Activated T-helper 1 cell treated with anti-CD3 and anti-CD28 coated beads, Interleukin-12 subunit alpha, Interleukin-12 subunit beta, Interleukin-2, Interleukin-4 antibody, amounts not matched to agents 30 ng/mL and 10 ng/mL and 1 ng/mL, durations not matched to agents 14 hours and 24 hours and 36 hours (primary cell): ENCODE measurements at regions of chr10 and their contacts with region 1.

Region 1: DNA sequence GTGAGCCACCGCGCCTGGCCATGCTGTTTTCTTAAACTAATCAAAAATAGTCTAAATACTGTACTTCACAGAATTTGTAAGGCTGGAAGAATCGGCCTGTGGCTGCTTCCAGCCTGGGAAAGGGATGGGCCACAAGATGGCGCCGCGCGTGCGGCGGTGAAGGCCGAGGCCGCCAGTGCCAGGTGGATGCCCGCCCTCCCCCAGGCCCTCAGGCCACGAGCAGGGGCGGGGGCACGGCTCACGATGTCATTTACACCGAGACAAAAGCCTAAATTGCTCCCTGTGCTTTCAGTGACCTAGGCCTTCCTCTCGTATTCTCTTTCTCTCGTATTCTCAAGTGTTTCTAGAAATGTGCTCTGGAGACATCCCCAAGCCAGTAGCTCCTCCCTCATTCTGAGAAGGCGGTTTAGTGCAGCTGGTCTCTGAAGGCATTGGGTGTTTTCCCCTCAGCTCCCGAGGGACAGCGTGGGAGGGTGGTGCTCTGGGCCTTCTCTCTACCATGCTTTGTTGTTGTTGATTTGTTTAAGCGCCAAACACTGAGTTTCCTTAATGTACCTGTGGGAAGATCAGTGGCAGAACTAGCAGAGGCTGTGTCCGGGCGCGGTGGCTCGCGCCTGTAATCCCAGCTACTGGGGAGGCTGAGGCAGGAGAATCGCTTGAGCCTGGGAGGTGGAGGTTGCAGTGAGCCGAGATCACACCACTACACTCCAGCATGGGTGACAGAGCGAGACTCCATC is 68.4 kb downstream of the CDC123 start:
- DNase-seq: peak; percentile 63
- H3K4me3 Mint-ChIP-seq: peak overlapping the region; percentile 82
- H3K27ac Mint-ChIP-seq: peak overlapping the region; percentile 98
- H3K4me1 Mint-ChIP-seq: peaks cover 23% of the 10 kb centered on the region
- H3K27me3 Mint-ChIP-seq: peaks cover 1% of the 10 kb centered on the region

Region 2: GRCh38 chr10:12097791-12098190 is 166.6 kb before region 1 on chr10:
- intact Hi-C with region 1: no loop called
- DNase-seq: no peak
- H3K4me3 Mint-ChIP-seq: no peak overlapping the region
- H3K27ac Mint-ChIP-seq: no peak overlapping the region
- H3K4me1 Mint-ChIP-seq: no peaks in the 10 kb centered on the region
- H3K27me3 Mint-ChIP-seq: no peaks in the 10 kb centered on the region

Region 3: GRCh38 chr10:12241810-12242529 is 22.4 kb before region 1 on chr10:
- intact Hi-C with region 1: loop called (anchors 1 kb)
- DNase-seq: no peak
- H3K4me3 Mint-ChIP-seq: peak overlapping the region; percentile 59
- H3K27ac Mint-ChIP-seq: peak overlapping the region; percentile 80
- H3K4me1 Mint-ChIP-seq: peaks cover 26% of the 10 kb centered on the region
- H3K27me3 Mint-ChIP-seq: no peaks in the 10 kb centered on the region

Region 4: DNA sequence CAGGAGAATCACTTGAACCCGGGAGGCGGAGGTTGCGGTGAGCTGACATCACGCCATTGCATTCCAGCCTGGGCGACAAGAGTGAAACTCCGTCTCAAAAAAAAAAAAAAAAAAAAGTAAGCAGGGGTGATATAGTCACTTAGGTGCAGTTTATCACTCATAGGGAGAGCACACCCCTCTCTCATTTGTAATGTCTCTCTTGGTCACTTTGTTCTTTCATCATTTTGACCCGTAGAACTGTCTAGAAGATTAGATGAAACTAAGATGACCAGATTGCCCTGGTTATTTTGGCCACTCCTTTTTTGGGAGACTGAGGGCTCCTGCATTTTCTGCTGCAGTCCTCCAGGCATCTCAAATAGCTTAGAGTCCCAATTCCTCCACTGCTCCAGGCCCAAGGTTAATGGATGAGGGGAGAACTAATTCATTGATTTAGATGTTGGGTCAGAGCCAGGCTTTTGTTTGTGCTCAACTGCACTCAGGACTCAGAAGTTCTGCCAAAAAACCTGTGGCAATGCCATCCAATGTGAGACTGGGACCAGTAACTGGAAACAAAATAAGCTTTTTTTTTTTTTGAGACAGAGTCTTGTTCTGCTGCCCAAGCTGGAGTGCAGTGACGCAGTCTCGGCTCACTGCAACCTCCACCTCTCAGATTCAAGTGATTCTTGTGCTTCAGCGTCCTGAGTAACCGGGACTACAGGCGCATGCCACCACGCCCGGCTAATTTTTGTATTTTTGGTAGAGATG is 35.0 kb after region 1 on chr10:
- intact Hi-C with region 1: loop called (anchors 2 kb)
- DNase-seq: no peak
- H3K4me3 Mint-ChIP-seq: no peak overlapping the region
- H3K27ac Mint-ChIP-seq: no peak overlapping the region
- H3K4me1 Mint-ChIP-seq: no peaks in the 10 kb centered on the region
- H3K27me3 Mint-ChIP-seq: no peaks in the 10 kb centered on the region

Region 5: GRCh38 chr10:12369982-12370381 is 105.6 kb after region 1 on chr10:
- intact Hi-C with region 1: loop called (anchors 1 kb)
- DNase-seq: no peak
- H3K4me3 Mint-ChIP-seq: no peak overlapping the region
- H3K27ac Mint-ChIP-seq: no peak overlapping the region
- H3K4me1 Mint-ChIP-seq: peaks cover 18% of the 10 kb centered on the region
- H3K27me3 Mint-ChIP-seq: no peaks in the 10 kb centered on the region

Region 6: DNA sequence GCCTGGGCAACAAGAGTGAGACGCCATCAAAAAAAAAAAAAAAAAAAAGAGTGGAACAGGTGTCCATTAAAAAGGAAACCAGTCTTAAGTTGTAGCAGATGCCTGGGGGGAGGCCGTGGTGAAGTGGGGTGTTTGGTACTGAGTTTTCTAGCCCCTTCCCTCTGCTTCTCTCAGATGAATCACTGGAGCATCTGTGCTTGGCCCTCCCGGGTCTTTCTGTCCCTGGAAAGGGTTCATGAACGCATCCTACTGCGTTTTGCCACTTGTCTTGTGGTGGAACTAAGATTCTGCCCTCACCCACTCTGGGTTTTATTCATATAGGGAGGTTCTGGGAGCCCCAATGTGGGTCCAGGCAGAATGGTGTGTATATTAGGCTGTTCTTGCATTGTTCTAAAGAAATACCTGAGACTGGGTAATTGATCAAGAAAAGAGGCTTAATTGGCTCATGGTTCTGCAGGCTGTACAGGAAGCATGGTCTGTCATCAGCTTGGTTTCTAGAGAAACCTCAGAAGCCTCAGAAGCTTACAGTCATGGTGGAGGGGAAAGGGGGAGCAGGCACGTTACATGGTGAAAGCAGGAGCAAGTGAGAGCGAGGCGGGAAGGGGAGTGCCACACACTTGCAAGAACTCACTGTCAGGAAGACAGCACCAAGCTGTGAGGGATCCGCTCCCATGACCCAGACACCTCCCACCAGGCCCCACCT is 148.4 kb after region 1 on chr10:
- intact Hi-C with region 1: loop called (anchors 5 kb)
- DNase-seq: peak; percentile 44
- H3K4me3 Mint-ChIP-seq: no peak overlapping the region
- H3K27ac Mint-ChIP-seq: peak overlapping the region; percentile 19
- H3K4me1 Mint-ChIP-seq: peaks cover 20% of the 10 kb centered on the region
- H3K27me3 Mint-ChIP-seq: peaks cover 4% of the 10 kb centered on the region

Region 7: DNA sequence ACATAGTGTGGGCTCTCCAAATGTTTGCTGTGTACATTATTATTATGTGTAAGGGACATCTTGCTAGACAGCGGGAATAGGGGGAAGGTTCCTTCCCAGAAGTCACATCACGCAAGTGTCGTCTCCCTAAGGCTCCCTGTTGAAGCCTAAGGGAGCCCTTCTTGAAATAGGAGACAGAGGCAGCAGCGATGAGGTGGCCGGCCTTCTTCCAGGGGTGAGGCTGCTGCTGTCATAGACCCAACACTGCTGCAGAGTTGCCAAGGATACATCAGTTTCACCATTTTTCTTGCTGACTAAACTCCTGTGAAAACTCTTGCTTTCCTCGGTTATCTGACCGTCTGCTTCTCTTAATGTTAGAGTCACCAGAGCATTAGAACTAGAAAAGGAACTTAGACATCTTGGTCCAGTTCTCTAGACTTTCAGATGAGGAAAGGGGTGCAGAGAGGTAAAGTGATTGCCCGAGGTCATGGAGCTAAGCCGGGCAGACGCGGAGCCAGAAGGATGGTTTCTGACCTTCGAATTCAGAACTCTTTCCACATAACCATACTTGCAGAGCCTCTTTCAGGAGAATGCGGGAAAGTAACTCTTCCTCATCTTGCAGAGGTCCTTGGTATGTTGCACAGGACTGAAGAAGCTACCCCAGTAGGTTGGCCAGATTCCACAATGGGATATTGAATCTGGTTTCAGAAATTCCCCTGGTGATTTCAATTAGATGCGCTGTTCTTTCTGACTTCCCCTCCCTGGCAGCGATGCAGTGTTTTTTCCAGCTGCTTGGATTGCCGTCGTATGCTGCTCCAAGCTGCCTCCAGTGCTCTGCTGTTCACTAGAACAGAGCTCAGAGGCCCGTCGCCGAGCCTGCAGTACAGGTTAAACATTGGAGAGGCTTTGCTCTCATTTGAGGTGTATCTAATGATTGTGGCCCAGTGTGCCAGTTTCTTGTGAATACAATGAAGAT is 302.1 kb after region 1 on chr10:
- intact Hi-C with region 1: loop called (anchors 10 kb)
- DNase-seq: no peak
- H3K4me3 Mint-ChIP-seq: no peak overlapping the region
- H3K27ac Mint-ChIP-seq: no peak overlapping the region
- H3K4me1 Mint-ChIP-seq: peaks cover 18% of the 10 kb centered on the region
- H3K27me3 Mint-ChIP-seq: peaks cover 2% of the 10 kb centered on the region

Region 8: DNA sequence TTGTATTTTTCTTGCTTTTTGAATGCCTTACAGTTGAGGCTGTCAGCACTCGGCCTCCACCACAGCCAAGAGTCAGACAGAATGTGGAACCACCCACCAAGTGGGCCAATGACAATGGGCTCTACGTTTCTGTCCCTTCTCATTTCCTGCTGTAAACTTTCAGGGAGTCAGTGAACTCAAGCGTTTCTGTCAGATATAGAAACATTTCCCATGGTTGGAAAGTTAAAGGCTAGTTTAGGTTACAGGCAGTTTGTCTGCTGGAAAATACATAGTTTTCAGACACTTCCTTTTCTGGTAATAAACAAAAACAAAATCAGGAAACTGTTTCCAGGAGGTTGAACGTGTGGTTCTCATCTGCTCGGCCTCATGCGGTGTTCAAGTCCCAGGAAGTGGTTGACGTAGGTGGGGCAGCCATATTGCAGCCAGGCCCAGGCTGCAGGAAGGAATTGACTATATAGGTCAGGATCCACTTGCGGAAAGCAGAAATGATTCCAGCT is 330.1 kb after region 1 on chr10:
- intact Hi-C with region 1: loop called (anchors 5 kb)
- DNase-seq: peak; percentile 64
- H3K4me3 Mint-ChIP-seq: peak overlapping the region; percentile 45
- H3K27ac Mint-ChIP-seq: peak overlapping the region; percentile 90
- H3K4me1 Mint-ChIP-seq: peaks cover 95% of the 10 kb centered on the region
- H3K27me3 Mint-ChIP-seq: no peaks in the 10 kb centered on the region